ENCODE measurements at regions of chr3 and their contacts with region 1.

Region 1: GRCh38 chr3:148089171-148089570 is 608.5 kb upstream of the AGTR1 start:
- DNase-seq: peak in 1 of 35 experiments; percentile 1
- ATAC-seq: no peak
- H3K4me3 ChIP-seq: no peak overlapping the region
- H3K4me3 Mint-ChIP-seq: no peak overlapping the region
- H3K27ac ChIP-seq: no peak overlapping the region
- H3K27ac Mint-ChIP-seq: no peak overlapping the region
- H3K4me1 ChIP-seq: no peaks in the 10 kb centered on the region
- H3K4me1 Mint-ChIP-seq: peaks cover 0 to 2% (median 0%) of the 10 kb centered on the region in 3 donors
- H3K27me3 ChIP-seq: no peaks in the 10 kb centered on the region
- H3K27me3 Mint-ChIP-seq: no peaks in the 10 kb centered on the region

Region 2: GRCh38 chr3:147890114-147890513 is 199.1 kb before region 1 on chr3:
- CTCF ChIA-PET with region 1: no interaction called
- POLR2A ChIA-PET with region 1: no interaction called
- DNase-seq: no peak
- ATAC-seq: no peak
- H3K4me3 ChIP-seq: no peak overlapping the region
- H3K4me3 Mint-ChIP-seq: no peak overlapping the region
- H3K27ac ChIP-seq: no peak overlapping the region
- H3K27ac Mint-ChIP-seq: no peak overlapping the region
- H3K4me1 ChIP-seq: no peaks in the 10 kb centered on the region
- H3K4me1 Mint-ChIP-seq: no peaks in the 10 kb centered on the region
- H3K27me3 ChIP-seq: no peaks in the 10 kb centered on the region
- H3K27me3 Mint-ChIP-seq: no peaks in the 10 kb centered on the region

Region 3: GRCh38 chr3:148075763-148076716 is 13.1 kb before region 1 on chr3:
- CTCF ChIA-PET with region 1: no interaction called
- POLR2A ChIA-PET with region 1: interaction called in 1 of 2 experiments, 12 read pairs
- DNase-seq: no peak
- ATAC-seq: no peak
- H3K4me3 ChIP-seq: no peak overlapping the region
- H3K4me3 Mint-ChIP-seq: no peak overlapping the region
- H3K27ac ChIP-seq: no peak overlapping the region
- H3K27ac Mint-ChIP-seq: no peak overlapping the region
- H3K4me1 ChIP-seq: no peaks in the 10 kb centered on the region
- H3K4me1 Mint-ChIP-seq: no peaks in the 10 kb centered on the region
- H3K27me3 ChIP-seq: no peaks in the 10 kb centered on the region
- H3K27me3 Mint-ChIP-seq: no peaks in the 10 kb centered on the region

Measured in T-cell (primary cell).